Activated T-helper 1 cell treated with anti-CD3 and anti-CD28 coated beads, Interleukin-12 subunit alpha, Interleukin-12 subunit beta, Interleukin-2, Interleukin-4 antibody, amounts not matched to agents 30 ng/mL and 10 ng/mL and 1 ng/mL, durations not matched to agents 14 hours and 24 hours and 36 hours (primary cell): ENCODE measurements at regions of chr2 and their contacts with region 1.

Region 1: GRCh38 chr2:102049756-102050443 is 58.1 kb downstream of the IL1R2 start:
- DNase-seq: no peak
- H3K4me3 Mint-ChIP-seq: no peak overlapping the region
- H3K27ac Mint-ChIP-seq: no peak overlapping the region
- H3K4me1 Mint-ChIP-seq: peaks cover 1% of the 10 kb centered on the region
- H3K27me3 Mint-ChIP-seq: peaks cover 16% of the 10 kb centered on the region

Region 2: GRCh38 chr2:102033750-102034682 is 15.9 kb before region 1 on chr2:
- intact Hi-C with region 1: loop called (anchors 2 kb)
- DNase-seq: no peak
- H3K4me3 Mint-ChIP-seq: peak overlapping the region; percentile 24
- H3K27ac Mint-ChIP-seq: peak overlapping the region; percentile 78
- H3K4me1 Mint-ChIP-seq: peaks cover 44% of the 10 kb centered on the region
- H3K27me3 Mint-ChIP-seq: peaks cover 8% of the 10 kb centered on the region